GM12878 (cell line): ENCODE measurements at regions of chr4 and their contacts with region 1.

Region 1: GRCh38 chr4:105657117-105657765 is 51.2 kb downstream of the INTS12 start:
- DNase-seq: no peak
- ATAC-seq: no peak
- H3K4me3 ChIP-seq: no peak overlapping the region
- H3K27ac ChIP-seq: no peak overlapping the region
- H3K4me1 ChIP-seq: no peaks in the 10 kb centered on the region
- H3K27me3 ChIP-seq: no peaks in the 10 kb centered on the region
- CTCF ChIP-seq: no peak
- EP300 ChIP-seq: no peak
- POLR2A ChIP-seq: no peak
- RAD21 ChIP-seq: no peak

Region 2: DNA sequence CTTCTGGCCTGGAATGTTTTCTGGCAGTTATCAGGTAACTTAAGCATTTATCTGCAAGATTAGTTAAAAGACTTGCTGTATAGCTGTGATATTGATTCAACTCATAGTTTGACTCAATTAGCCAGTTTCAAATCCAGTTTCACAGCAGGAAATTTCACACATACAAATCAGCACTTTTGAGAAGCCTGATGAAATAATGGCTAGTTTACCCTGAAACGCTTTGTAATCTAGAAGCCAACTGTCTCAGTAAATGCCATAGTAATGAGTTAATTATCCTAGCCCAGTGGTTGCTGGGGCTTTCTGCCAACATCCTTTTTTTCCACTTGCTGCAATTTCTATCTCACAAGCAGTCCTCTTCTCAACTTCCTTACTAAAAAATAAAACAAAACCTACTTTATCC is 51.7 kb before region 1 on chr4:
- CTCF ChIA-PET with region 1: no interaction called
- POLR2A ChIA-PET with region 1: no interaction called
- RAD21 ChIA-PET with region 1: no interaction called
- SMC1A ChIA-PET with region 1: interaction called, 22 read pairs
- in situ Hi-C with region 1: no loop called
- intact Hi-C with region 1: no loop called
- DNase-seq: no peak
- ATAC-seq: peak; percentile 71
- H3K4me3 ChIP-seq: no peak overlapping the region
- H3K27ac ChIP-seq: no peak overlapping the region
- H3K4me1 ChIP-seq: no peaks in the 10 kb centered on the region
- H3K27me3 ChIP-seq: no peaks in the 10 kb centered on the region
- CTCF ChIP-seq: no peak
- EP300 ChIP-seq: 0 out of 4 replicates have a peak, but pooled peaks of 1 of the 2 experiments have one; percentile 58
- POLR2A ChIP-seq: no peak
- RAD21 ChIP-seq: no peak

Region 3: DNA sequence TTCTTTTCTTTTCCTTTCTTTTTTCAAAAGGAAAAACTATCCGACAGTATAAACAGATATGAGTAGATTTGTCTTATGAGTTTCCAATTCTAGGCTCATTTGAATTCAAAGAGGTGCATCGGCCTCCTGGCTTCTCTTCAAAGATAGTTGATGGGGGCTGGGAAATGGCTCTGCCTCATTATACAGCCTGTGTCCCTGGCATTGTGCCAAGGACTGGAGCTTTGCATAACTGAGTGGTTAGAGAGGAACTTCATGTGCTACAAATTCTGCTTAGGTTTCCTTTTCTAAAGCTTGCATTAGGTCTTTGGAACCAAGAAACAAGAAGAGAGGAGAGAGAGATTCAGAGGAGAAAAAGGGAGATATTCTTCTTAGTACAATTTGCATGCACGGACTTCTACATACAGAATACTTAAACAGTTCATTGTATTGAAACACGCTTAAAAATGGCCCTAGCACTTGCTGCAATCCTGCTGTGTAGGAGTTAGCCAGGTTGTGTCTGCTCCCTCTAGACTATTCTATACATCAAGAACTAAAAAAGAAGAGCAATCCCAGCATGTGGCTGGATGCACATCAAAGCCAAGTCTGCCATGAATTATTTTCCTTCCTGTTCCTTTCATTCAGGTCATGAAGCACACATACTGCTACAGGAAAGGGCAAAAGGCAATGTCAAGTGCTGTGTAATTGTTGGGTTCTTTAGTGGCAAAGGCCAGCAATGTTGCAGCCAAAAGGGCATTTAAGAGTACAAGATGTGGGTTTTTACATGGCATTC is 19.6 kb before region 1 on chr4:
- CTCF ChIA-PET with region 1: interaction called, 6 read pairs
- POLR2A ChIA-PET with region 1: interaction called, 4 read pairs
- RAD21 ChIA-PET with region 1: interaction called, 22 read pairs
- SMC1A ChIA-PET with region 1: interaction called, 130 read pairs
- in situ Hi-C with region 1: no loop called
- intact Hi-C with region 1: no loop called
- DNase-seq: peak; percentile 45
- ATAC-seq: peak; percentile 86
- H3K4me3 ChIP-seq: no peak overlapping the region
- H3K27ac ChIP-seq: no peak overlapping the region
- H3K4me1 ChIP-seq: peaks cover 12% of the 10 kb centered on the region
- H3K27me3 ChIP-seq: no peaks in the 10 kb centered on the region
- CTCF ChIP-seq: no peak
- EP300 ChIP-seq: no peak
- POLR2A ChIP-seq: no peak
- RAD21 ChIP-seq: no peak